OCI-LY7 (cell line): ENCODE measurements at regions of chr10 and their contacts with region 1.

Region 1: GRCh38 chr10:97278491-97278989 is 13.9 kb downstream of the ARHGAP19 start:
- DNase-seq: peak; percentile 83
- H3K4me3 ChIP-seq: peak overlapping the region; percentile 64
- H3K27ac ChIP-seq: peak overlapping the region; percentile 94
- H3K4me1 ChIP-seq: peaks cover 54% of the 10 kb centered on the region
- CTCF ChIP-seq: peak; percentile 87

Region 2: GRCh38 chr10:96577069-96577468 is 701.5 kb before region 1 on chr10:
- CTCF ChIA-PET with region 1: no interaction called
- POLR2A ChIA-PET with region 1: no interaction called
- intact Hi-C with region 1: no loop called
- DNase-seq: no peak
- H3K4me3 ChIP-seq: no peak overlapping the region
- H3K27ac ChIP-seq: no peak overlapping the region
- H3K4me1 ChIP-seq: peaks cover 19% of the 10 kb centered on the region
- CTCF ChIP-seq: no peak

Region 3: DNA sequence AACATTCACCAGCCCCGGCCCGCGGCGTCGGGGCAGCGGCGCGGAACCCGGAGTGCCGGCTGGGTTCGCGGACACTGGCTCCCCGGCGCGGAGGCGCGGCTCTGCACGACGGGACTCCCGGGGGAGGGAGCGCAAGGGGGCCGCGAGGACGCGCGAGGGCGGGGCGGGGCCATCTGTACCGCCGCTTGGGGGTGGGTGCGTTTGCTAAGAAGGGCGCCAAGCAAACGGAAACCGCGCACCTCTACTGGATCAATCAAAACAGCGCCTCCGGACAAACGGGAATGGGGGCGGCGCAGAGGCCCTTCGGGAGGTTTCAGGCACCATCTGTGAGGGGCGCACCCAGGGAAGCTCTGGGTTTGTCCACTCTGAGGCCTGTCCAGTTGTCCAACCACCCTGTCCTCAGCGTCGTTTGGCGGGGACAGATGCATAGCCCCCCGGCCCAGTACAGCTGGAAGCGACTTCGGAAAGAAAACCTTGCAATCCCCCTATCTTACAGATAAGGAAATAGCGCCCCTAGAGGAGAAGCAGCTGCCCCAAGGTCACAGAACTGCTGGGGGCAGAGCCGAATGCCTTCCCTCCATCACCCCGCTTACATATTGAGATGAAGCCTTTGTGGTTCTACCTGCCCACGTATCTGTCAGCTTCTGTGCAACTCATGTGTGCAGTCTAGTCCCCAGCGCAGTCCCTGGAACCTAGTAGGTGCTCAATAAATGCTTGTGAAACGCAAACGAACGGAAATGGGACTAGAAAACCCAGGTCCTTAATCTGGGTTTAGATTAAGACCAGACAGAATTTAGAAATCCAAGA is 82.1 kb before region 1 on chr10:
- CTCF ChIA-PET with region 1: no interaction called
- POLR2A ChIA-PET with region 1: interaction called, 11 read pairs
- intact Hi-C with region 1: no loop called
- DNase-seq: peak; percentile 92
- H3K4me3 ChIP-seq: peak overlapping the region; percentile 70
- H3K27ac ChIP-seq: peak overlapping the region; percentile 35
- H3K4me1 ChIP-seq: peaks cover 51% of the 10 kb centered on the region
- CTCF ChIP-seq: peak; percentile 87

Region 4: DNA sequence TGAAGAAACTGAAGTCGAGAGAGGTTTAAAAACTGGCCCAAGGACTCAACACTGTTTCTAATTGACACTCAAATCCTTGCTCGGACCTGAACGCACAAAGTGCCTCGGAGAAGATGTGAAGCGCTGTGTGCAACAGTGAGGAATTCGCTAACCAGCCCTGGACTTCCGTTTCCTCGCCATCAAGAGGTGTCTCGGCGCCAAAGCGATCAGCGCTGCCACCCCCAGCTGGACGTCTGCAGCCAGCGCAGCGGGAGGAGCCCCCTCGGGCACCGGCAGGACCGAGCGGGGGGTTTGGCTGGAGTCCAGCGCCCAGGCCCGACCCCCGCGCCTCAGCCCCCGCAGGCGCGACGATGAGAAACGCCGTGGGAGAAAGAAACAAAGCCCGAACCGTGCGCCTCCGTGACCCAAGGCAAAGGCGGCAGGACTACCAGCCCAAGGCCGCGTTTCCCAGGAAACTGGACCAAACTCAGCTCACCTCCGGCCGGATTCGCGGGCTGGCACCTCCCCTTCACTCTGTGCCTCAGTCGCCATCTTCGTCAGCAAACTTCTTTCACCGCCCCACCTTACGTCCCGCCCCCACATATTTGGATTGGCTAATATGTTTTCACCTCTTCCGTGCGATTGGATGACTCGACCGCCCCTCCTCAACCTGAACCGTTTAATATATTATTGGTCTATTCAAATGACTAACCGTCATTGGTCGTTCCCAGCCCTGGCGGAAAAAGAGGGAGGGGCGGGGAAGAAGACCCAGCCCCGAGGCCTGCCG is 13.7 kb after region 1 on chr10 and contains the start of gene ARHGAP19:
- CTCF ChIA-PET with region 1: no interaction called
- POLR2A ChIA-PET with region 1: interaction called, 14 read pairs
- intact Hi-C with region 1: no loop called
- DNase-seq: peak; percentile 98
- H3K4me3 ChIP-seq: peak within 1 kb of the TSS; percentile 89
- H3K27ac ChIP-seq: peak within 1 kb of the TSS; percentile 84
- H3K4me1 ChIP-seq: peaks cover 26% of the 10 kb centered on the region
- CTCF ChIP-seq: peak; percentile 43; the same call in 1 of the 2 replicates
- total RNA-seq, gene ARHGAP19: 33.3 and 34.1 TPM in 2 replicates

Region 5: DNA sequence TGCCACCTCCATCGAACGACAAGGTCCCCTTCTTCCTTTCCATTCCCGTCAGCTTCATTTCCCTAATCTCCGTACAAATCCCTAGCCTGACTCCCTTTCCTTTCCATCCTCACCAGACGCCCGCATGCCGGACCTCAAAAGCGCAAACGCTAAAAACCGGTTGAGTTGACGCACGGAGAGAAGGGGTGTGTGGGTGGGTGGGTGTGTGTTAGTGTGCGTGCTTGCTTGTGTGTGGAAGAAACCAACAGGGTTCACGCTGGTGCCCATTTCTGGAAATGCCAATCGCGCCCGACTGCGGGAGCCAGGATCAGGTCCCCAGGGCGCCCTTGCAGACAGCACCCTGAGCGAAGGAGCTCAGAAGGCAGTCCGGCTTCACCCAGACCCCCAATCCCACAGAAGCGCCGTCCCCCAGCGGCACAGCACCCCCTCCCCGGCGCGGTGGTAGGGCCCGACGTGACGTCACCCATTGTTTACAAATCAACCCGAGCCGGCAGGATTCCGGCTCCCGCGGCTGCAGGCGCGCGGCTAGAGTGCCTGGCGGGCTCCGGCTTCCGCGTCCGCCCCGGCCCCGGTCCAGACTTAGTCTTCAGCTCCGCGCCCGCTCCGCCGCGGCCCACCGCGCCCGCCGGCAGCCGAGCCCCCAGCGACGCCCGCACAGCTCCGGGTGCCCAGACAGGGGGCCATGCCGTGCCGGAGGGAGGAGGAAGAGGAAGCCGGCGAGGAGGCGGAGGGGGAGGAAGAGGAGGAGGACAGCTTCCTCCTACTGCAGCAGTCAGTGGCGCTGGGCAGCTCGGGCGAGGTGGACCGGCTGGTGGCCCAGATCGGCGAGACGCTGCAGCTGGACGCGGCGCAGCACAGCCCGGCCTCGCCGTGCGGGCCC is 40.5 kb after region 1 on chr10 and contains the start of gene FRAT1:
- CTCF ChIA-PET with region 1: interaction called, 5 read pairs
- POLR2A ChIA-PET with region 1: interaction called, 3 read pairs
- intact Hi-C with region 1: loop called (anchors 2 kb)
- DNase-seq: peak; percentile 90
- H3K4me3 ChIP-seq: peak within 1 kb of the TSS; percentile 95
- H3K27ac ChIP-seq: peak within 1 kb of the TSS; percentile 50
- H3K4me1 ChIP-seq: peaks cover 14% of the 10 kb centered on the region
- CTCF ChIP-seq: no peak
- total RNA-seq, gene FRAT1: 5.1 and 7.0 TPM in 2 replicates

Region 6: GRCh38 chr10:97334370-97335175 is 56.0 kb after region 1 on chr10 and contains the start of gene FRAT2:
- CTCF ChIA-PET with region 1: interaction called, 3 read pairs
- POLR2A ChIA-PET with region 1: interaction called, 3 read pairs
- intact Hi-C with region 1: loop called (anchors 2 kb)
- DNase-seq: peak; percentile 93
- H3K4me3 ChIP-seq: peak within 1 kb of the TSS; percentile 76
- H3K27ac ChIP-seq: peak within 1 kb of the TSS; percentile 54
- H3K4me1 ChIP-seq: peaks cover 48% of the 10 kb centered on the region
- CTCF ChIP-seq: no peak
- total RNA-seq, gene FRAT2: 9.3 and 12.3 TPM in 2 replicates

Region 7: GRCh38 chr10:97400665-97401454 is 122.3 kb after region 1 on chr10 and contains the start of gene RRP12:
- CTCF ChIA-PET with region 1: no interaction called
- POLR2A ChIA-PET with region 1: interaction called, 3 read pairs
- intact Hi-C with region 1: loop called (anchors 5 kb)
- DNase-seq: peak; percentile 98
- H3K4me3 ChIP-seq: peak within 1 kb of the TSS; percentile 84
- H3K27ac ChIP-seq: peak within 1 kb of the TSS; percentile 50
- H3K4me1 ChIP-seq: peaks cover 5% of the 10 kb centered on the region
- CTCF ChIP-seq: peak; percentile 60
- total RNA-seq, gene RRP12: 32.1 and 38.6 TPM in 2 replicates